GM12878 (cell line): ENCODE measurements at regions of chr4 and their contacts with region 1.

Region 1: DNA sequence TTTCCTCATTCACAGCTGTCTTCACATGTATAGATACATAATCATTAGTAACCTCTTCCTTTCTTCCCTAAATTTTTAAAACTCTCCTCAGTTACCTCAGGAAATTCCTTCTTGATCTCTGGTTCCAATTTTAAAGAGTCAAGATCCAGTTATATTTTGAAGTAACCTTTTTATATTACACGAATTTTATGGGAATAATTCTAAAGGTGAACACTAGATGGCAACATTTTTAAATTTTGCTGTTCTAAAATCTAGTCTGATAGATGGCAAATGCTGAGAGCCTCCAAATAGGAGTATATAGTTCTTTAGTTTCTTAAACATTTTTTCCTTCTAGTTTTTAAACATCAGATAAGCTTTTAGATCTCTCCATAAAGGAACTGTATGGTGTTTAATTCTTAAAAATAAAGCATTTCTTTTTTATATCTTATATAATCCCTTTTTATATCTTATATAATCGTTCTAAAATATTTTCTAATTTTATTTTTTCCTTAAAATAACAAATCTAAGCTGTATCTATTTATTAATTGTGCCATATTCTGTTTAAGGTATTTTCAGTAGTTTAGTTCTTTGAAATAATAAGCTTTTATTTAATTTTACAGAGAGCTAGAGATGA is 37.9 kb upstream of the PAPSS1 start:
- DNase-seq: no peak
- ATAC-seq: 0 out of 3 replicates have a peak, but pooled peaks have one; percentile 38
- H3K4me3 ChIP-seq: no peak overlapping the region
- H3K27ac ChIP-seq: no peak overlapping the region
- H3K4me1 ChIP-seq: no peaks in the 10 kb centered on the region
- H3K27me3 ChIP-seq: no peaks in the 10 kb centered on the region
- CTCF ChIP-seq: peak; percentile 11 to 38 (median 24); a peak in 3 of 6 replicates
- EP300 ChIP-seq: no peak
- POLR2A ChIP-seq: no peak
- RAD21 ChIP-seq: peak; percentile 32; the same call in 1 of the 2 replicates

Region 2: GRCh38 chr4:107746161-107746560 is 11.8 kb before region 1 on chr4:
- CTCF ChIA-PET with region 1: interaction called, 10 read pairs
- POLR2A ChIA-PET with region 1: no interaction called
- RAD21 ChIA-PET with region 1: no interaction called
- SMC1A ChIA-PET with region 1: interaction called, 4 read pairs
- in situ Hi-C with region 1: no loop called
- intact Hi-C with region 1: no loop called
- DNase-seq: no peak
- ATAC-seq: no peak
- H3K4me3 ChIP-seq: no peak overlapping the region
- H3K27ac ChIP-seq: no peak overlapping the region
- H3K4me1 ChIP-seq: no peaks in the 10 kb centered on the region
- H3K27me3 ChIP-seq: no peaks in the 10 kb centered on the region
- CTCF ChIP-seq: no peak
- EP300 ChIP-seq: no peak
- POLR2A ChIP-seq: no peak
- RAD21 ChIP-seq: no peak

Region 3: DNA sequence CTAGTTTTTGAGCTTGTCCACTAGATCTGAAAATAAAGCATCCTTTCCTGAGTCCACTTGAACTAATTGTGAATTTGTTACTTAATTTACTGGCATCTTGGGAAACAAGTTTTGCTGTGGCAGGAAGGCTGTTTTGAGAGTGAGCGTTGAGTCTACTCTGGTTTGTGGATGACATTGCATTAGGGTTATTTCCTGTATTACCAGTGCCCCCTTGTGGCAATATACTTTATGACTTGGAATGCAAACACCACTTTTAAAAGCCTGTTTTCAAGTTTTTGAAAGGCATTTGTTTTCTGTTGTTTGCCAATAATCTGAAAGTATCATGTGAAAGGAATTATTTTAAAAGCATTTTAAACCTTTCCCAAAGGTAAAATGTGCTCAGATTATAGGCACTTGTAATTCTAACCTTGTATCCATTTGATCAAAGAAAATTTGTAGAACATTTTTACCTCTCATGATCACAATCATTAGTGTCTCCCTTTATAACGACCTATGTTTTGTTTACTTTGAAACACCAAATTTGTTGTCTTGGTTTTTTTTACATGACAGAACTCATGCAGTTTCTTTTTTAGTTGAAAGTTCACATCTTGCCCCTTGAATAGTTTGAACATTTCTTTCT is 155.4 kb after region 1 on chr4:
- CTCF ChIA-PET with region 1: interaction called, 55 read pairs
- POLR2A ChIA-PET with region 1: no interaction called
- RAD21 ChIA-PET with region 1: interaction called, 17 read pairs
- SMC1A ChIA-PET with region 1: interaction called, 15 read pairs
- in situ Hi-C with region 1: loop called (anchors 5 kb)
- intact Hi-C with region 1: loop called (anchors 1 kb)
- DNase-seq: no peak
- ATAC-seq: peak; percentile 86
- H3K4me3 ChIP-seq: no peak overlapping the region
- H3K27ac ChIP-seq: no peak overlapping the region
- H3K4me1 ChIP-seq: no peaks in the 10 kb centered on the region
- H3K27me3 ChIP-seq: no peaks in the 10 kb centered on the region
- CTCF ChIP-seq: peak; percentile 56 to 80 (median 73)
- EP300 ChIP-seq: no peak
- POLR2A ChIP-seq: no peak
- RAD21 ChIP-seq: peak; percentile 84